ENCODE measurements at regions of chr1 and their contacts with region 1.

Region 1: GRCh38 chr1:245829194-245829593 is 674.4 kb downstream of the KIF26B start:
- DNase-seq: no peak
- ATAC-seq: no peak
- H3K4me3 ChIP-seq: no peak overlapping the region
- H3K4me3 Mint-ChIP-seq: no peak overlapping the region
- H3K27ac ChIP-seq: no peak overlapping the region
- H3K27ac Mint-ChIP-seq: no peak overlapping the region
- H3K4me1 ChIP-seq: no peaks in the 10 kb centered on the region
- H3K4me1 Mint-ChIP-seq: no peaks in the 10 kb centered on the region
- H3K27me3 ChIP-seq: no peaks in the 10 kb centered on the region
- H3K27me3 Mint-ChIP-seq: no peaks in the 10 kb centered on the region

Region 2: GRCh38 chr1:245698860-245699259 is 130.3 kb before region 1 on chr1:
- CTCF ChIA-PET with region 1: no interaction called
- POLR2A ChIA-PET with region 1: no interaction called
- DNase-seq: no peak
- ATAC-seq: no peak
- H3K4me3 ChIP-seq: no peak overlapping the region
- H3K4me3 Mint-ChIP-seq: no peak overlapping the region
- H3K27ac ChIP-seq: no peak overlapping the region
- H3K27ac Mint-ChIP-seq: no peak overlapping the region
- H3K4me1 ChIP-seq: no peaks in the 10 kb centered on the region
- H3K4me1 Mint-ChIP-seq: no peaks in the 10 kb centered on the region
- H3K27me3 ChIP-seq: peaks cover 0 to 3% of the 10 kb centered on the region in 2 experiments
- H3K27me3 Mint-ChIP-seq: no peaks in the 10 kb centered on the region

Region 3: GRCh38 chr1:245770156-245770555 is 59.0 kb before region 1 on chr1:
- CTCF ChIA-PET with region 1: no interaction called
- POLR2A ChIA-PET with region 1: interaction called in 1 of 2 experiments, 12 read pairs
- DNase-seq: no peak
- ATAC-seq: no peak
- H3K4me3 ChIP-seq: no peak overlapping the region
- H3K4me3 Mint-ChIP-seq: no peak overlapping the region
- H3K27ac ChIP-seq: no peak overlapping the region
- H3K27ac Mint-ChIP-seq: no peak overlapping the region
- H3K4me1 ChIP-seq: no peaks in the 10 kb centered on the region
- H3K4me1 Mint-ChIP-seq: peaks cover 0 to 1% (median 0%) of the 10 kb centered on the region in 3 donors
- H3K27me3 ChIP-seq: no peaks in the 10 kb centered on the region
- H3K27me3 Mint-ChIP-seq: no peaks in the 10 kb centered on the region

Region 4: GRCh38 chr1:245814651-245815050 is 14.5 kb before region 1 on chr1:
- CTCF ChIA-PET with region 1: interaction called in 1 of 2 experiments, 15 read pairs
- POLR2A ChIA-PET with region 1: no interaction called
- DNase-seq: no peak
- ATAC-seq: no peak
- H3K4me3 ChIP-seq: no peak overlapping the region
- H3K4me3 Mint-ChIP-seq: no peak overlapping the region
- H3K27ac ChIP-seq: no peak overlapping the region
- H3K27ac Mint-ChIP-seq: no peak overlapping the region
- H3K4me1 ChIP-seq: no peaks in the 10 kb centered on the region
- H3K4me1 Mint-ChIP-seq: no peaks in the 10 kb centered on the region
- H3K27me3 ChIP-seq: no peaks in the 10 kb centered on the region
- H3K27me3 Mint-ChIP-seq: no peaks in the 10 kb centered on the region

Measured in T-cell (primary cell).